WTC11 (cell line): ENCODE measurements at regions of chr1 and their contacts with region 1.

Region 1: GRCh38 chr1:67766141-67766978 is 66.9 kb downstream of the GNG12 start:
- DNase-seq: peak; percentile 36
- ATAC-seq: peak; percentile 64
- H3K4me3 Mint-ChIP-seq: peak overlapping the region; percentile 54
- H3K27ac Mint-ChIP-seq: peak overlapping the region; percentile 28; the same call in 1 of the 2 replicates
- H3K4me1 Mint-ChIP-seq: peaks cover 13% of the 10 kb centered on the region
- H3K27me3 Mint-ChIP-seq: no peaks in the 10 kb centered on the region
- CTCF ChIP-seq: peak; percentile 75

Region 2: DNA sequence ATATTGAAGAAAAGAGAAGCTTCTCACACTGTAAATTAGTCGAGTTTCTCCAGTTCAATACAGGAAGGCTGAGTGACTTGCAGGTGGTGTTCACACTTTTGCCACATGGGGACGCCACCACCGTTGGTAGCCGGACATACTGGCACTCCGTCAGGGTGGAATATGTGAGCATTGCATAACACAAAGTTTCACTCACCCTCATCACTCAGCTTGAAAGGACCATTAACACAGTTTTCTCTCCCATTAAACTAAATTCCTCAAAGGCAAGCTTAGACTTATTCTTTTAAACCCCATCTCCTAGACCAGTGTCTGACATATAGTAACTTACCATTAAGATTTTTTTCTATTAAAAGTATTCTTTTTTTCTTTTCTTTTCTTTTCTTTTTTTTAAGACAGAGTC is 230.9 kb before region 1 on chr1:
- CTCF ChIA-PET with region 1: interaction called, 98 read pairs
- POLR2A ChIA-PET with region 1: no interaction called
- DNase-seq: peak; percentile 80
- ATAC-seq: peak; percentile 80
- H3K4me3 Mint-ChIP-seq: no peak overlapping the region
- H3K27ac Mint-ChIP-seq: no peak overlapping the region
- H3K4me1 Mint-ChIP-seq: no peaks in the 10 kb centered on the region; the same call in 1 of the 2 replicates
- H3K27me3 Mint-ChIP-seq: peaks cover 6% of the 10 kb centered on the region; the same call in 1 of the 2 replicates
- CTCF ChIP-seq: peak; percentile 87

Region 3: GRCh38 chr1:67624680-67625079 is 141.7 kb before region 1 on chr1:
- CTCF ChIA-PET with region 1: no interaction called
- POLR2A ChIA-PET with region 1: no interaction called
- DNase-seq: no peak
- ATAC-seq: no peak
- H3K4me3 Mint-ChIP-seq: no peak overlapping the region
- H3K27ac Mint-ChIP-seq: no peak overlapping the region
- H3K4me1 Mint-ChIP-seq: no peaks in the 10 kb centered on the region
- H3K27me3 Mint-ChIP-seq: no peaks in the 10 kb centered on the region; the same call in 1 of the 2 replicates
- CTCF ChIP-seq: no peak

Region 4: GRCh38 chr1:67785847-67786753 is 19.7 kb after region 1 on chr1:
- CTCF ChIA-PET with region 1: interaction called, 11 read pairs
- POLR2A ChIA-PET with region 1: no interaction called
- DNase-seq: no peak
- ATAC-seq: no peak
- H3K4me3 Mint-ChIP-seq: no peak overlapping the region
- H3K27ac Mint-ChIP-seq: no peak overlapping the region
- H3K4me1 Mint-ChIP-seq: peaks cover 12% of the 10 kb centered on the region
- H3K27me3 Mint-ChIP-seq: no peaks in the 10 kb centered on the region
- CTCF ChIP-seq: no peak

Region 5: GRCh38 chr1:67853704-67854103 is 87.3 kb after region 1 on chr1:
- CTCF ChIA-PET with region 1: interaction called, 40 read pairs
- POLR2A ChIA-PET with region 1: no interaction called
- DNase-seq: peak; percentile 95
- ATAC-seq: peak; percentile 98
- H3K4me3 Mint-ChIP-seq: no peak overlapping the region
- H3K27ac Mint-ChIP-seq: no peak overlapping the region
- H3K4me1 Mint-ChIP-seq: peaks cover 8% of the 10 kb centered on the region
- H3K27me3 Mint-ChIP-seq: no peaks in the 10 kb centered on the region
- CTCF ChIP-seq: peak; percentile 85

Region 6: GRCh38 chr1:68057564-68057963 is 291.2 kb after region 1 on chr1:
- CTCF ChIA-PET with region 1: interaction called, 14 read pairs
- POLR2A ChIA-PET with region 1: no interaction called
- DNase-seq: peak; percentile 40
- ATAC-seq: peak; percentile 99
- H3K4me3 Mint-ChIP-seq: no peak overlapping the region
- H3K27ac Mint-ChIP-seq: no peak overlapping the region
- H3K4me1 Mint-ChIP-seq: peaks cover 9% of the 10 kb centered on the region
- H3K27me3 Mint-ChIP-seq: peaks cover under 1% of the 10 kb centered on the region; the same call in 1 of the 2 replicates
- CTCF ChIP-seq: no peak

Region 7: DNA sequence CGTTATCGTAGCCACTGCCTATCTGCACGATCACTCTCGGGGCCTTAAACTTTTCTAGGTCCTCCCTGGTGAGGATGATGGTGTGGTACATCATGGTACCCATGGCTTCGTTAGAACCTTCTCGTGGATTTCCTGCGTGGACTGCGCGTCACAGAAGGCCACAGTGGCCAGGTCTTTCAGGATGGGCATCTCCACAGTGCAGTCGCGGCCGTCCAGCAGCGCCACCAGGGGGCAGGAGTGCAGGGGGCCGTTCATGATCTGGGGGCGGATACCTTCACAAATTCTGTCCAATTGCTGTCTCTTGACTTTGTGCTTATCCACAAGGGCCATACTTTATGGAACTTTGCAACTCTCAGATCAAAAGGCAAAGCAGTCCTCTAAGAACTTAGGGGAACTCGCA is 396.4 kb after region 1 on chr1:
- CTCF ChIA-PET with region 1: interaction called, 11 read pairs
- POLR2A ChIA-PET with region 1: no interaction called
- DNase-seq: peak; percentile 56
- ATAC-seq: peak; percentile 80
- H3K4me3 Mint-ChIP-seq: no peak overlapping the region
- H3K27ac Mint-ChIP-seq: no peak overlapping the region
- H3K4me1 Mint-ChIP-seq: peaks cover 1% of the 10 kb centered on the region
- H3K27me3 Mint-ChIP-seq: no peaks in the 10 kb centered on the region
- CTCF ChIP-seq: peak; percentile 54